ENCODE measurements at regions of chr2 and their contacts with region 1.

Region 1: GRCh38 chr2:142880260-142880659 is 2.8 kb downstream of the KYNU start:
- DNase-seq: no peak
- H3K4me3 ChIP-seq: no peak overlapping the region
- H3K27ac ChIP-seq: no peak overlapping the region
- H3K4me1 ChIP-seq: peaks cover 4 to 36% (median 10%) of the 10 kb centered on the region in 3 donors
- H3K27me3 ChIP-seq: no peaks in the 10 kb centered on the region
- CTCF ChIP-seq: no peak
- POLR2A ChIP-seq: no peak

Region 2: GRCh38 chr2:142989273-142990204 is 109.3 kb after region 1 on chr2:
- intact Hi-C with region 1: loop called (anchors 10 kb)
- DNase-seq: no peak
- H3K4me3 ChIP-seq: no peak overlapping the region
- H3K27ac ChIP-seq: no peak overlapping the region
- H3K4me1 ChIP-seq: no peaks in the 10 kb centered on the region
- H3K27me3 ChIP-seq: no peaks in the 10 kb centered on the region
- CTCF ChIP-seq: peak in 5 of 6 experiments; percentile 31 to 61 (median 37)
- POLR2A ChIP-seq: no peak

Measured in esophagus squamous epithelium (tissue), 5 donors.